Ascending aorta (tissue), 2 donors: ENCODE measurements at regions of chr6 and their contacts with region 1.

Region 1: GRCh38 chr6:12472601-12473038 is 182.5 kb downstream of the EDN1 start:
- DNase-seq: peak; percentile 58 to 94
- H3K4me3 ChIP-seq: no peak overlapping the region
- H3K27ac ChIP-seq: peak overlapping the region; percentile 79 to 85
- H3K4me1 ChIP-seq: peaks cover 9 to 30% of the 10 kb centered on the region in 2 donors
- H3K27me3 ChIP-seq: no peaks in the 10 kb centered on the region
- CTCF ChIP-seq: no peak

Region 2: GRCh38 chr6:12354499-12354898 is 118.1 kb before region 1 on chr6:
- intact Hi-C with region 1: loop called (anchors 1 kb)
- DNase-seq: peak in 1 of 2 donors; percentile 86
- H3K4me3 ChIP-seq: no peak overlapping the region
- H3K27ac ChIP-seq: peak overlapping the region; percentile 74 to 82
- H3K4me1 ChIP-seq: peaks cover 13 to 37% of the 10 kb centered on the region in 2 donors
- H3K27me3 ChIP-seq: no peaks in the 10 kb centered on the region
- CTCF ChIP-seq: no peak

Region 3: GRCh38 chr6:12426122-12426521 is 46.5 kb before region 1 on chr6:
- intact Hi-C with region 1: loop called (anchors 2 kb)
- DNase-seq: no peak
- H3K4me3 ChIP-seq: no peak overlapping the region
- H3K27ac ChIP-seq: peak overlapping the region; percentile 66 to 74
- H3K4me1 ChIP-seq: peaks cover 9 to 20% of the 10 kb centered on the region in 2 donors
- H3K27me3 ChIP-seq: no peaks in the 10 kb centered on the region
- CTCF ChIP-seq: no peak

Region 4: DNA sequence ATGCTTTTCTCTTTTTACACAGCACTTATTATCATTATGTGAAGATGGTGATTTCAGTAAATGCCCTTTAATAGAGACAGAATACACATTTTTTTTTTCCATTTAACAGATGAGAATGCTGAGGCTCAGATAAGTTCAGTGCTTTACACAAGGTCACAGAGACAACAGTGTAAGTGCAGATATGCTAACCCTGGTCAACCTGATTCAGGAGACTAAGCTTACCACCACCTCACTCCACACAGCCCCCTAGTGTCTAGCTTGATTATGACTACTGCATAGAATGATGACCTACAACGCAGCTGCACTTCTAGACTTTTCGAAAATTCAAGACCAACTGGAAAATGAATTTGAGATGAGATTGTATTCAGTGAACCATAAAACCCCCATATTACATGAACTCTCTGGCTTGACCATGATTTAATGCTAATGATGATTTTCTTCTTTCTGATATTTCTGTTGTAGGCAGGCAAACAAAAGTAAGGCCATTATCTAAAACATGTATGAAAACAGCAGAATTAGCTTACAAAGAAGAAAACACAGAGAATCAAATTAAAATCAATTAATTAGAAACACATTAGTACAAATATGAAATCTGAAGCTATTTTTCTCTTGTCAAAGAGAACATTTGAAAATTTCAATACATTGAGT is 31.8 kb after region 1 on chr6:
- intact Hi-C with region 1: no loop called
- DNase-seq: no peak
- H3K4me3 ChIP-seq: no peak overlapping the region
- H3K27ac ChIP-seq: no peak overlapping the region
- H3K4me1 ChIP-seq: no peaks in the 10 kb centered on the region
- H3K27me3 ChIP-seq: no peaks in the 10 kb centered on the region
- CTCF ChIP-seq: no peak